AG04450 (cell line): ENCODE measurements at regions of chr17 and their contacts with region 1.

Region 1: GRCh38 chr17:63919311-63919723 is 678 bp upstream of the GH1 start:
- DNase-seq: peak; percentile 15
- H3K4me3 ChIP-seq: no peak overlapping the region
- H3K27ac ChIP-seq: no peak overlapping the region
- H3K27me3 ChIP-seq: peaks cover 20% of the 10 kb centered on the region
- CTCF ChIP-seq: peak; percentile 94

Region 2: DNA sequence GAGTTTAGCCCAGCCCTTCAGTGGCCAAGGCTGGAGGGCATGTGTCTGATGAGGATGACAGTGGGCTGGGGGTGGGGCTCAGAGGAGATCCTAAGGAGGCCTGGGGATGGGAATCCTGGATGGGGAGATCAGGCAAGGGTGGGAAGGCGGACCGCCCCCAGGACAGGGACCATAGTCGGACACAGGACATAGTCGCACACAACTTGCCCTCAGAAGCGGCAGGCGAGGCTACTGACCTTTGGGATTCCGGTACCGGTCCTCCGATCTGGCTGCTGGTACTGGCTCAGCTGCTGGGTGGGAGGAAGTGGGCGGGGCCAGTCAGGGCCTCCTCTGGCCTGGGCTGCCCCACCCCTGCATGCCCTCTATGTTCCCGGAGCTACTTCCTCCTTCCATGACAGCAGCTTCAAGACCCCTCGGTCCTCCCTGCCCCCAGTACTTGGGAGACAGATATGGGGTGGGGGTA is 11.8 kb after region 1 on chr17:
- CTCF ChIA-PET with region 1: interaction called, 14 read pairs
- POLR2A ChIA-PET with region 1: no interaction called
- DNase-seq: no peak
- H3K4me3 ChIP-seq: no peak overlapping the region
- H3K27ac ChIP-seq: no peak overlapping the region
- H3K27me3 ChIP-seq: peaks cover 24% of the 10 kb centered on the region
- CTCF ChIP-seq: no peak

Region 3: DNA sequence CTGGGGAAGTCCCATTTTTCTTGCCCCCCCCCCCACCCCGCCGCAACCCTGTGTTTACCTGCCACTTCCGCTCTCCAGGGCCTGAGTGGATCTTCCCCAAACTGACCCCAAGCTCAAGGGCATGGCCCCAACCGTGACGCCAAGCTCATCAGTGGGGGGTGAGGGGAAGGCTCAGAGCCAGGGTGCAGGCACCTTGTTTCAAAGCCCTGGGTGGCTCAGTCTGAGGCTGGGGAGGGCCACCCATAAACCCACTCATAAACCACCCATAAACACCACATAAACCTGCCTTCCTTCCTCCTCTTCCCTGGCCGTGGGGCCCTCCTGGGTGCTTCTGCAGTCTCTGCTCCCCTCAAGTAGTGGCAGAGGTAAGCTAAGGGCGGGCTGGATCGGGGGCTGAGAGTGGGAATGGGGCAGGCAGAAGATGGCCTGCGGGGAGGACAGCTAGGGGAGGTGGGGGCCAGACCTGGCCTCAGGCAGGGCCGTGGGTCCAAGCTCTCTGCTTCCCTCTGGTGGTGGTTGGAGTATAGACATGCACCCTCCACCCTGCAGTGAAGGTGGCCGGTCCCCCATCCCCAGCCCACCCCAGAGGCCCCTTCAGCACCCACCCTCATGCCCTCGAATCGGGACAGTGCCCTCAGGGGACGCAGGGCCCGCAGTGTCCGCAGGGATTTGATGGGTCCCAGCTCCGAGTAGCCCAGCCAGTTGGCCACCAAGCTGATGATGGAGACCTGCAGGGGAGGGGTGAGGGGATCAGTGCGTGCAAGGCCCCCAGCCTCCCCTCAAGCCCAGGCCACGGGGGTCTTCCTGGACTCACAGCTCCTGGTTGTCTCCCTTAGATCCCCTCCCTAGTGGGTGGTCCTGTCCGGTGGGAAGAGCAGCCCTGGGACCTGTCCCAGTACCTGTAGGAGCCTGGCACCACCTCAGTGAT is 27.4 kb after region 1 on chr17:
- CTCF ChIA-PET with region 1: interaction called, 45 read pairs
- POLR2A ChIA-PET with region 1: no interaction called
- DNase-seq: no peak
- H3K4me3 ChIP-seq: no peak overlapping the region
- H3K27ac ChIP-seq: no peak overlapping the region
- H3K27me3 ChIP-seq: peaks cover 20% of the 10 kb centered on the region
- CTCF ChIP-seq: peak; percentile 73

Region 4: DNA sequence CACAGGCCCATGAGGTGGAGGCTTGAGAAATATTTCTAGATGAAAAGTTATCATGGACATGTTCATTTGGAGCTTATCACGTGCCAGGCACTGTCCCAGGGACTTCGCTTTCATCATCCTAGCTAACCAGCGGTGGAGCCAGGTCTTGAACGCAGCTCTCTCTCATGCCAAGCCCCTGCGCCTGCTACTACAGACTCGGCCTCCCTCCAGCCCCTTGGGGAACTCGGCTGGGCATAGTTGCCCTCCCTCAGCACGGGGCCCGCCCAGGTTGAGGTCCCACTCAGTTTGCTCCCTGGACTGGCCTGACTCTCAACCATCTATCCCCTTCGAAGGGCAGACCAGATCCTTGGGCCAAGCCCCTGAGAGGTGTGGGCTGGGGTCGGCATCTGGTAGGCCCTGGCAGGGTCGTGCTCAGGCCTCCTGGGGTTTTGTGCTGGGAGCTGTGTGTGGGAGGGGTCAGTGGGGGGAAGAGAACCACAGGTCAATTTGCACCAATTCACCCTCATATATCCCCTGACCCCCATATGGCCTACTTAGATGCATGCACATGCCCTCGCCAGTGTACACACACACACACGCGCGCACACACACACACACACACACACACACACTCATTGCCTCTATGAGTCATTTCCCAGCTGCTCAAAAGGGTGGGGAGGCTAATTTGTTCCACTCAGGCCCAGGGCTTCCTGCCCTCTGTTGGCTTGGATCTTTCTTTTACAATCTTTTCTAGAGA is 65.5 kb after region 1 on chr17:
- CTCF ChIA-PET with region 1: interaction called, 19 read pairs
- POLR2A ChIA-PET with region 1: no interaction called
- DNase-seq: peak; percentile 81
- H3K4me3 ChIP-seq: no peak overlapping the region
- H3K27ac ChIP-seq: no peak overlapping the region
- H3K27me3 ChIP-seq: no peaks in the 10 kb centered on the region
- CTCF ChIP-seq: 0 out of 2 replicates have a peak, but pooled peaks have one; percentile 14